ENCODE measurements at regions of chr9 and their contacts with region 1.

Region 1: DNA sequence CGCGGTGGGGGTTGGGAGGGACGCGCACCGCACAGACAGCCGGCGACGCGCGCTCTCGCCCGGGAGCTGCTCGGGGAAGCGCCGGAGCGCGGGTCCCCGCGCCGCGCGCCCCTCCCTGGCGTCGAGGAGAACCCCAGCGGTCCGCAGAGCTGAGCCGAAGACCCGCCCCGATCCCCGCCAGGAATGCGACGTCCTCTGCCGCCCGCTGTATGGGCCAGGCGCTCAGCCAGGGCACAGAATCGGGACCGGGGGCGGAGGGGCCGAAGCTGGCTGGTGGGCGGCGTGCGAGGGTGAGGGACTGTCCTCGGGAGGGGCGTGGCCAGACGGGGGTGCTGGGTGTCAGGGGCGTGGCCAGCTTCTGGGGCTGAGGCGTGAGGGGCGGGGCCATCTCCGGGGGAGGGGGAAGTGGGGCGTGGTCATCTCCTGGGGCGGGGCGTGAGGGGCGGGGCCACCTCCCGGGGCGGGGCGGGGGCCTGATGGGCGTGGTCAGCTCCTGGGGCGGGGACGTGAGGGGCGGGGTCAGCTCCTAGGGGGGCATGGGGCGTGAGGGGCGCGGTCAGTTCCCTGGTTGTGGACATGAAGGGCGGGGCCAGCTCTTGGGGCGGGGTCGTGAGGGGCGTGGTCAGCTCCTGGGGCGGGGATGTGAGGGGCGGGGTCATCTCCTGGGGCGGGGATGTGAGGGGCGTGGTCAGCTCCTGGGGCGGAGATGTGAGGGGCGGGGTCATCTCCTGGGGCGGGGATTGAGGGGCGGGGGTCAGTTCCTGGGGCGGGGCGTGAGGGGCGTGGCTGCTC is 965 bp downstream of the PTGDS start:
- DNase-seq: peak; percentile 91
- H3K4me3 Mint-ChIP-seq: no peak overlapping the region
- H3K27ac Mint-ChIP-seq: no peak overlapping the region
- H3K4me1 Mint-ChIP-seq: peaks cover 7% of the 10 kb centered on the region
- H3K27me3 Mint-ChIP-seq: peaks cover 5% of the 10 kb centered on the region

Region 2: DNA sequence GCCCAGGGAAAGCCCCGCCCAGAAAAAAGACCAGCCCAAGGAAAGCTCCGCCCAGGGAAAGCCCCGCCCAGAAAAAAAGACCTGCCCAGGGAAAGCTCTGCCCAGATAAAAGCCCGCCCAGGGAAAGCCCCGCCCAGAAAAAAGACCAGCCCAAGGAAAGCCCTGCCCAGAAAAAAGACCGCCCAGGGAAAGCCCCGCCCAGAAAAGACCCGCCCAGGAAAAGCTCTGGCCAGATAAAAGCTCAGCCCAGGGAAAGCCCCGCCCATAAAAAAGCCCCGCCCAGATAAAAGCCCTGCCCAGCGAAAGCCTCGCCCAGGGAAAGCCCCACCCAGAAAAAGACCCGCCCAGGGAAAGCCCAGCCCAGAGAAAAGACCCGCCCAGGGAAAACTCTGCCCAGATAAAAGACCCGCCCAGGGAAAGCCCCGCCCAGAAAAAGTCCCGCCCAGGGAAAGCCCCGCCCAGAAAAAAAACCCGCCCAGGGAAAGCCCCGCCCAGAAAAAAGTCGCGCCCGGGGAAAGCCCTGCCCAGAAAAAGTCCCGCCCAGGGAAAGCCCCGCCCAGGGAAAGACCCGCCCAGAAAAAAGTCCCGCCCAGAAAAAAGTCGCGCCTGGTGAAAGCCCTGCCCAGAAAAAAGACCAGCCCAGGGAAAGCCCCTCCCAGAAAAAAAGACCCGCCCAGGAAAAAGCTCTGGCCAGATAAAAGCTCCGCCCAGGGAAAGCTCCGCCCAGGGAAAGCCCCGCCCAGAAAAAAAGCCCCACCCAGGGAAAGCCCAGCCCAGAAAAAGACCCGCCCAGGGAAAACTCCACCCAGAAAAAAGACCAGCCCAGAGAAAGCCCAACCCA is 172.6 kb after region 1 on chr9:
- intact Hi-C with region 1: loop called (anchors 10 kb)
- DNase-seq: peak; percentile 86
- H3K4me3 Mint-ChIP-seq: no peak overlapping the region
- H3K27ac Mint-ChIP-seq: peak overlapping the region; percentile 58
- H3K4me1 Mint-ChIP-seq: peaks cover 2% of the 10 kb centered on the region
- H3K27me3 Mint-ChIP-seq: peaks cover 2% of the 10 kb centered on the region

Region 3: DNA sequence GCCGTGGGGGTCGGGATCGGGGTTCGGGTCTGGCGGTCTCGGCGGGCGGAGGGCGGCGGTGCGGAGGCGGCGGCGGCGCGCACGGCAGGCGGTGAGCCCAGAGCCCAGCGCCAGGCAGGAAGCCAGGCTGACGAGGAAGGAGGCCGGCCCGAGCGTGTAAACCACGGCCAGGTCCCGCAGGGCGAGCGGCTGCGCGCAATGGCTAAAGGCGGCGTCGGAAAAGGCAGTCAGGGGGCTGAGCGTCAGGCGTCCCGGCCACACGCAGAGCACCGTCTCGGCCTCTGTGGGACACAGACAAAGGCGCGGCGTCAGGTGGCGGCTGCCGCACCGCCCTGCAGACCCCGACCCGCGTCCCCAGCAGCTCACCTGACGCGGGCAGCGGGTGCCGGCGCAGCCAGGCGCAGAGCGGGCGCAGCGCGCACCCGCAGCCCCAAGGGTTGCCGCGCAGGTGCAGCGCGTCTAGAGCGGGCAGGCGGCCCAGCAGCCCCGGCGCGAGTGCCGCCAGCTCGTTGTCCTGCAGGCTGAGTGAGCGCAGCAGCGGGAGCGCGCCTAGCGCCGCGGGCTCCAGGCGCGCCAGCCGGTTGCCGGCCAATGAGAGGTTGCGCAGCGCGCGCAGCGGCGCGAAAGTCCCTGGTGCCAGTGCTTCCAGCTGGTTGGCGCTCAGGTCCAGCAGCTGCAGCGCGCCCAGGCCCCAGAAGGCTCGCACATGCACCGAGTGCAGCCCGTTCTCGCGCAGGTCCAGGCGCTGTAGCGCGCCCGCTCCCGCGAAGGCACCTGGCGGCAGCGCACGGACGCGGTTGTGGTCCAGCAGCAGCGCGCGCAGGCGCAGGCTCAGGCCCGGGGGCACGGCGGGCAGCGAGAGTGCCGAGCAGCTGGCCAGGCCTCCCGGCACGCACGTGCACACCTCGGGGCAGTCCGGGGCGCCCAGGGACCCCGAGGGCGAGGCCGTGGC is 190.9 kb after region 1 on chr9:
- intact Hi-C with region 1: no loop called
- DNase-seq: peak; percentile 75
- H3K4me3 Mint-ChIP-seq: peak overlapping the region; percentile 66
- H3K27ac Mint-ChIP-seq: no peak overlapping the region
- H3K4me1 Mint-ChIP-seq: no peaks in the 10 kb centered on the region
- H3K27me3 Mint-ChIP-seq: peaks cover 31% of the 10 kb centered on the region